Colonic mucosa (tissue), 4 donors: ENCODE measurements at regions of chr2 and their contacts with region 1.

Region 1: GRCh38 chr2:134118279-134119116 is 135.4 kb upstream of the MGAT5 start:
- DNase-seq: peak; percentile 92
- H3K4me3 ChIP-seq: no peak overlapping the region
- H3K27ac ChIP-seq: no peak overlapping the region
- H3K4me1 ChIP-seq: peaks cover 15% of the 10 kb centered on the region
- H3K27me3 ChIP-seq: no peaks in the 10 kb centered on the region
- CTCF ChIP-seq: peak; percentile 57

Region 2: GRCh38 chr2:134178241-134178877 is 59.9 kb after region 1 on chr2:
- intact Hi-C with region 1: no loop called
- DNase-seq: no peak
- H3K4me3 ChIP-seq: no peak overlapping the region
- H3K27ac ChIP-seq: no peak overlapping the region
- H3K4me1 ChIP-seq: peaks cover 13% of the 10 kb centered on the region
- H3K27me3 ChIP-seq: no peaks in the 10 kb centered on the region
- CTCF ChIP-seq: no peak

Region 3: DNA sequence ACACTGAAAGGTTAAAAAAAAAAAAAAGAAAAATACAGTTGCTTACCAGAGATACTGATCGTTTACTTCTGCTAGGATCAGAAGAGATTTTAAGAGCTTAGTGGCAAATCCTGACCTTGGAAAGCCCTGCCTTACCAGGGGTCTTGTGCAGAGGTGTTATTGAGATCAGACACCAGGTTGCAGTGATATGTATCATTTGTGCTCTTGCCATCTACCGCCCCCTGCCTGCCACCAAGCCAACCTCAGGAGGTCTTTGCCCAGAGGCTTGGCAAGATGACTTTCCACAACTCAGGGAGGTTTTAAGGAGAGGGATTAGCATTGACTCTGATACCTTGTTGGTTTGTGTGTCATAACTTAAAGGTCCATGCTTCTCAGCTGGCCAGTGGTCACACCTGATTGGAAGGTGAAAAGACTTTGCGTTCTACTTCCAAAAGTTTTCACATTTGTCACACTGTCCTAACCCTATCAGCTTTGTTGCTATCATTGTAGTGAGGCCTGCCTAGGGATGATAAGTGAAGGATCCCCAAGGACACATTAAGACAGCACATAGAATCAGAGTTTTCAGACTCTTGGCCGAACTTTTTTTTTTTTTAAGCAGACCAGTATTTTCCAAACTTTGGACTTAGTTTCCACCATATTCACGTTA is 89.2 kb after region 1 on chr2:
- intact Hi-C with region 1: loop called (anchors 5 kb)
- DNase-seq: peak; percentile 71
- H3K4me3 ChIP-seq: no peak overlapping the region
- H3K27ac ChIP-seq: no peak overlapping the region
- H3K4me1 ChIP-seq: no peaks in the 10 kb centered on the region
- H3K27me3 ChIP-seq: no peaks in the 10 kb centered on the region
- CTCF ChIP-seq: peak; percentile 64

Region 4: DNA sequence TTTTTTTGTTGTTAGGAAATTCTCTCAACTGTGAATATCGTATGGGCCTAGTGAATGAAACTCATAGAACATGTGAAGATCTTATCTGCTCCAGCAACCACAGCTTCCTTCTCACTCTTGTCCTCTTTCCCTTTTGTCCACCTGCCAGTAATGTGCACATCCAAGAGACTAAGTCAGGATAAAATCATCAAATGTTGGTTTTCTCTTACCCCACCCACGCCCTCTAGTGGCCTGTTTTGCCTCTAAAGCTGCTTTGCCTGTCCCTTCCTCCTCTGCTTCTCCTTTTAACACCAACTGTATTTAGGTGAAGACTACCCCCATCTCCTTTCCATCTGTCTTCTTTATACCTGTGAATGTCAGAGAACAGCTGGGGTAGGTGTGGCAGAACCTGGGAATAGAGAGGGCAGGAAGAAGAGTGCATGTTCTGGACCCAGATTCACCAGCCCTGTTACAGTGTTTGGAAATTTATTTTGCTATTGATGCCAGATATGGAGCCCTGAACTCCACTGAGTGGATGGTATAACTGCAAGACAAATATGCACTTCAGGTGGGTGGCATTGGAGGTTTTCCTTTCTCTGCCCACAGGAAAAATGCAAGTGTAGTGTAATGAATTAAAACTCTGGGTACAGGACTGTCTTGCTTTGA is 127.0 kb after region 1 on chr2:
- intact Hi-C with region 1: loop called (anchors 5 kb)
- DNase-seq: peak; percentile 89
- H3K4me3 ChIP-seq: no peak overlapping the region
- H3K27ac ChIP-seq: no peak overlapping the region
- H3K4me1 ChIP-seq: no peaks in the 10 kb centered on the region
- H3K27me3 ChIP-seq: no peaks in the 10 kb centered on the region
- CTCF ChIP-seq: peak; percentile 65

Region 5: GRCh38 chr2:134411828-134412638 is 293.5 kb after region 1 on chr2:
- intact Hi-C with region 1: loop called (anchors 5 kb)
- DNase-seq: peak; percentile 76
- H3K4me3 ChIP-seq: no peak overlapping the region
- H3K27ac ChIP-seq: no peak overlapping the region
- H3K4me1 ChIP-seq: peaks cover 7% of the 10 kb centered on the region
- H3K27me3 ChIP-seq: no peaks in the 10 kb centered on the region
- CTCF ChIP-seq: peak; percentile 61